ENCODE measurements at regions of chr12 and their contacts with region 1.

Region 1: DNA sequence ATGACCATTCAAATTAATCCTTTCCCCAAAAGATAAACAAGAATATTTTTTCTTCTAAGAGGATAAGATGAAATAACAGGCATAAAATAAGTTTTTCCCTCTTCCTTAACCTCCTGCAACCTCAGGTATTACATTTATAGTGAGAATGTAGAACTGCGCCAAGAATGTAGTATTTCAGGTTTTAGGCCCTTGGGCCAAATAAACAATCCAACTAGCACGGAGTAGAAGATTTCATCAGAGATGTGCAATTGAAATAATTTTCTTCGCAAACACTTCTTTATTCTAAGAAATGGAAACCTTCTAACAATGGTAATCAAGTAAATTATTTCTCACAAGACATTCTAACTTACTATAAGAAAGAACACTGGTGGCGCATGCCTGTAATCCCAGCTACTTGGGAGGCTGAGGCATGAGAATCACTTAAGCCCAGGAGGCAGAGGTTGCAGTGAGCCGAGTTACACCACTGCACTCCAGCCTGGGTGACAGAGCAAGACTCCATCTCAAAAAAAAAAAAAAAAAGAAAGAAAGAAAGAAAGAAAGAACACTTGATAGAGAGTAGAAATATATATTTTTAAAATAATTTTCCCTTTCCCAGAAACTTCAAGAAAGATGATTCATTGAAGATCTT is 100.8 kb downstream of the TAOK3 start:
- DNase-seq: no peak
- ATAC-seq: no peak
- H3K4me3 ChIP-seq: no peak overlapping the region
- H3K27ac ChIP-seq: no peak overlapping the region
- H3K4me1 ChIP-seq: no peaks in the 10 kb centered on the region
- H3K27me3 ChIP-seq: no peaks in the 10 kb centered on the region
- CTCF ChIP-seq: no peak
- EP300 ChIP-seq: no peak
- POLR2A ChIP-seq: no peak
- RAD21 ChIP-seq: no peak

Region 2: GRCh38 chr12:118290130-118290529 is 18.2 kb after region 1 on chr12:
- CTCF ChIA-PET with region 1: no interaction called
- POLR2A ChIA-PET with region 1: no interaction called
- RAD21 ChIA-PET with region 1: no interaction called
- SMC1A ChIA-PET with region 1: interaction called, 10 read pairs
- in situ Hi-C with region 1: no loop called
- intact Hi-C with region 1: no loop called
- DNase-seq: no peak
- ATAC-seq: no peak
- H3K4me3 ChIP-seq: no peak overlapping the region
- H3K27ac ChIP-seq: no peak overlapping the region
- H3K4me1 ChIP-seq: no peaks in the 10 kb centered on the region
- H3K27me3 ChIP-seq: no peaks in the 10 kb centered on the region
- CTCF ChIP-seq: no peak
- EP300 ChIP-seq: no peak
- POLR2A ChIP-seq: no peak
- RAD21 ChIP-seq: no peak

Measured in GM12878 (cell line).